ENCODE measurements at regions of chr20 and their contacts with region 1.

Region 1: DNA sequence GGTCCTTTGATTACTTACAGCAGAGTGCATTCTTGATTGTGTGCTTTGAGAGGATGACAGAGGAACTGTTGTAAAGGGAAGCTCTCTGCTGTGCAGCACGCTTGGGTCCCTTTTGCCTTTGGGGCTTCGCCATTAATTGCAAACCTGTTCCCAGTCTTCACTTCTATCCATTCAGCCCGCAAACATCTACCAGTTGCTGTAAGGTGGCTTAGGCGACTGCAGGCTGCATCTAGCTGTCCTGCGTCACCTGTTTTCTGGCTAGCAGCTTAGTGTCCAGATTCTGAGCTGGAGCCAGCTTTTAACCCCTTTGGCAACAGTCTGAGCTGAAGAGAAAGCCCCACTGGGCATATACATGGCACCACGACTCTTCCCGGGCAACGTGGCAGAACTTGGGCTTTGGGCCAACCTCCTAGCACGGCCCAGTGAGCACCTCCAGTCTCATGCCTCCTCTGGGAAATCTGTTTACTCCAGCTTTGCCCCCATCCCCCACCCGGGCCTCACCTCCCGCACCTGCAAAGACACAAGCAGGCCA is 2.5 kb upstream of the FASTKD5 start:
- DNase-seq: no peak
- H3K4me3 ChIP-seq: no peak overlapping the region
- H3K27ac ChIP-seq: no peak overlapping the region
- H3K4me1 ChIP-seq: peaks cover 8 to 38% (median 21%) of the 10 kb centered on the region in 4 experiments
- H3K27me3 ChIP-seq: peaks cover 0 to 3% (median 0%) of the 10 kb centered on the region in 5 experiments

Region 2: GRCh38 chr20:3172743-3173609 is 10.8 kb after region 1 on chr20 and contains the start of gene LZTS3:
- CTCF ChIA-PET with region 1: interaction called, 10 read pairs
- POLR2A ChIA-PET with region 1: interaction called, 3 read pairs
- DNase-seq: peak; percentile 77 to 94 (median 93)
- H3K4me3 ChIP-seq: peak within 1 kb of the TSS; percentile 13 to 87 (median 78)
- H3K27ac ChIP-seq: peak within 1 kb of the TSS in 1 of 2 experiments; percentile 70
- H3K4me1 ChIP-seq: peaks cover 0 to 25% (median 19%) of the 10 kb centered on the region in 4 experiments
- H3K27me3 ChIP-seq: peaks cover 12 to 41% (median 27%) of the 10 kb centered on the region in 5 experiments

Measured in common myeloid progenitor, CD34-positive (primary cell).